ENCODE measurements at regions of chr7 and their contacts with region 1.

Region 1: DNA sequence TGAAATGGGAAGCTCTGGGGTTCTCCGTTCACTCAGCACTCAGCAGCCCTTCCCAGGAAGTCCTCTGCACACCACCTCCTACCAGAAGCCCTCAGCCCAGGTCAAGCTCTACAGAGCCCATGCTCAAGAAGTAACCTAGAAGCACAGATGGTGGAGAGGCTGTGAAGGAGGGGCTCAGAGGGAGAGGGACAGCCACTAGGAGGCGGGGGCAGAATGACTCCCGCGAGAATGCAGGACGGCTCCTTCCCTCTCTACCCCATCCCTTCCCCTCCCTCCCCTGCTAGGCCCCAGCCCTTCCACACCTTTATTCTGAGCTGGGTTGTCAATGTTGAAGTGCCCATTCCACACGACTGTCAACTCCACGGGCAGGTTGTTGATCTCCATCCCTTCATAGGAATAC is 373.2 kb downstream of the PLXNA4 start:
- DNase-seq: no peak
- H3K4me3 ChIP-seq: no peak overlapping the region
- H3K27ac ChIP-seq: no peak overlapping the region
- H3K4me1 ChIP-seq: peaks cover 0 to 9% (median 2%) of the 10 kb centered on the region in 4 experiments; a peak in 2 of 7 replicates
- H3K27me3 ChIP-seq: no peaks in the 10 kb centered on the region
- CTCF ChIP-seq: no peak
- EP300 ChIP-seq: no peak
- POLR2A ChIP-seq: no peak
- RAD21 ChIP-seq: peak in 1 of 2 experiments; percentile 7; a peak in 1 of 4 replicates

Region 2: GRCh38 chr7:132117211-132117610 is 85.8 kb before region 1 on chr7:
- CTCF ChIA-PET with region 1: no interaction called
- POLR2A ChIA-PET with region 1: no interaction called
- DNase-seq: no peak
- H3K4me3 ChIP-seq: no peak overlapping the region
- H3K27ac ChIP-seq: no peak overlapping the region
- H3K4me1 ChIP-seq: peaks cover 0 to 5% (median under 1%) of the 10 kb centered on the region in 4 experiments; a peak in 4 of 7 replicates
- H3K27me3 ChIP-seq: no peaks in the 10 kb centered on the region
- CTCF ChIP-seq: no peak
- EP300 ChIP-seq: no peak
- POLR2A ChIP-seq: no peak
- RAD21 ChIP-seq: no peak

Region 3: GRCh38 chr7:132225216-132226030 is 22.4 kb after region 1 on chr7:
- CTCF ChIA-PET with region 1: interaction called, 12 read pairs
- POLR2A ChIA-PET with region 1: no interaction called
- DNase-seq: no peak
- H3K4me3 ChIP-seq: no peak overlapping the region
- H3K27ac ChIP-seq: no peak overlapping the region
- H3K4me1 ChIP-seq: peaks cover 0 to 3% (median 0%) of the 10 kb centered on the region in 4 experiments; a peak in 1 of 7 replicates
- H3K27me3 ChIP-seq: no peaks in the 10 kb centered on the region; a peak in 1 of 7 replicates
- CTCF ChIP-seq: no peak
- EP300 ChIP-seq: no peak
- POLR2A ChIP-seq: no peak
- RAD21 ChIP-seq: no peak

Region 4: GRCh38 chr7:132232406-132232805 is 29.4 kb after region 1 on chr7:
- CTCF ChIA-PET with region 1: interaction called, 13 read pairs
- POLR2A ChIA-PET with region 1: no interaction called
- DNase-seq: no peak
- H3K4me3 ChIP-seq: no peak overlapping the region
- H3K27ac ChIP-seq: no peak overlapping the region
- H3K4me1 ChIP-seq: peaks cover 0 to 7% (median 3%) of the 10 kb centered on the region in 4 experiments; a peak in 6 of 7 replicates
- H3K27me3 ChIP-seq: no peaks in the 10 kb centered on the region; a peak in 1 of 7 replicates
- CTCF ChIP-seq: no peak
- EP300 ChIP-seq: no peak
- POLR2A ChIP-seq: no peak
- RAD21 ChIP-seq: no peak

Region 5: GRCh38 chr7:132836743-132837142 is 633.7 kb after region 1 on chr7:
- CTCF ChIA-PET with region 1: no interaction called
- POLR2A ChIA-PET with region 1: no interaction called
- DNase-seq: no peak
- H3K4me3 ChIP-seq: no peak overlapping the region
- H3K27ac ChIP-seq: no peak overlapping the region
- H3K4me1 ChIP-seq: no peaks in the 10 kb centered on the region
- H3K27me3 ChIP-seq: no peaks in the 10 kb centered on the region
- CTCF ChIP-seq: no peak
- EP300 ChIP-seq: no peak
- POLR2A ChIP-seq: no peak
- RAD21 ChIP-seq: no peak

Measured in H1 (cell line).